Heart right ventricle (tissue), 16 donors: ENCODE measurements at regions of chr10 and their contacts with region 1.

Region 1: GRCh38 chr10:62826273-62826672 is 10.1 kb upstream of the EGR2 start:
- DNase-seq: no peak
- ATAC-seq: no peak
- H3K4me3 ChIP-seq: no peak overlapping the region
- H3K27ac ChIP-seq: no peak overlapping the region
- H3K4me1 ChIP-seq: no peaks in the 10 kb centered on the region
- H3K27me3 ChIP-seq: peaks cover 0 to 10% (median 0%) of the 10 kb centered on the region in 7 donors
- CTCF ChIP-seq: no peak

Region 2: GRCh38 chr10:62437696-62438095 is 388.6 kb before region 1 on chr10:
- intact Hi-C with region 1: loop called in 1 of 10 experiments (anchors 10 kb)
- DNase-seq: peak in 1 of 2 donors; percentile 29
- ATAC-seq: peak in 4 of 8 donors; percentile 56 to 69 (median 63)
- H3K4me3 ChIP-seq: no peak overlapping the region
- H3K27ac ChIP-seq: no peak overlapping the region
- H3K4me1 ChIP-seq: peaks cover 0 to 11% (median 0%) of the 10 kb centered on the region in 9 donors
- H3K27me3 ChIP-seq: peaks cover 0 to 7% (median 0%) of the 10 kb centered on the region in 7 donors
- CTCF ChIP-seq: peak; percentile 52 to 88 (median 74)

Region 3: GRCh38 chr10:63068246-63068645 is 242.0 kb after region 1 on chr10:
- intact Hi-C with region 1: loop called in 1 of 10 experiments (anchors 10 kb)
- DNase-seq: no peak
- ATAC-seq: no peak
- H3K4me3 ChIP-seq: no peak overlapping the region
- H3K27ac ChIP-seq: no peak overlapping the region
- H3K4me1 ChIP-seq: peaks cover 0 to 5% (median 0%) of the 10 kb centered on the region in 9 donors
- H3K27me3 ChIP-seq: peaks cover 0 to 68% (median 14%) of the 10 kb centered on the region in 7 donors
- CTCF ChIP-seq: no peak